Heart right ventricle (tissue), 16 donors: ENCODE measurements at regions of chr9 and their contacts with region 1.

Region 1: GRCh38 chr9:68844631-68845612 is 139.9 kb downstream of the PIP5K1B start:
- DNase-seq: peak; percentile 32 to 53
- ATAC-seq: peak in 7 of 8 donors; percentile 45 to 67 (median 55)
- H3K4me3 ChIP-seq: peak overlapping the region in 1 of 10 donors; percentile 28
- H3K27ac ChIP-seq: peak overlapping the region in 2 of 10 donors; percentile 15 to 68
- H3K4me1 ChIP-seq: peaks cover 0 to 46% (median 16%) of the 10 kb centered on the region in 9 donors
- H3K27me3 ChIP-seq: no peaks in the 10 kb centered on the region
- CTCF ChIP-seq: peak in 8 of 9 donors; percentile 40 to 67 (median 58)

Region 2: DNA sequence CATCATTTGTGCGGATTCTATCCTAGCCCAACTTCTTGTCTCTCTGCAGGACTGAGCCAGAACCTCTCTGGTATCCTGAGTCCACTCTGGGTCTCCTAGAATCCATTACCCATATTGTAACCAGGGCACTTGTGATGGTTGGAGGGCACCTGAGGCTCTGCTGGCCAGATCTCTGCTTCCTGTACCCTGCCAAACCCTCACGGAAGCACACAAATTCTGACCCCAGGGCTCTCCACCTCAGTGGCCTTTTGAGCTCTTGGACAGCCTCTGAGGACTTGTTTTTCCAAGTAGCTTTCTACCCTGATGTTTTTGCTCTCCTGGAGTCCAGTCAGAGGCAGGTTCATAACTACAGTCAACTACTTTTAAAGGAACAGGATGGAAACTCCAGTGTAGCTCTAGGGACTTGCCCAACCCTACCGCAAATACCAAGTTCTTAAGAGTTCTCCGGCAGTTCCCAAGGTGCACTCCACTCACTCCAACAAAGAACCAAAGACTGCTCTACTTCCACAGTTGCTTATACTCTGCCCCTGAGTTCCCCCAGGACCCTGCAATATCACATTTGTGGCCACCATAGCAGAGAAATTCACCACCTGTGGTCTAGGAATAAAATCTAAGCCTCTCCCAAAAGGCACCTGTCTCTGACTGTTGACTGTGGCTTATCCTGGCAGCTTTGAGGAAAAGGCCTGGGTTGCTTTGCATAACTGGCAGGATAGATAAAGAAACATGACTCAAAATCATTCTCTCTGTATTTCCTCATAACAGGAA is 130.3 kb before region 1 on chr9:
- intact Hi-C with region 1: loop called in 4 of 10 experiments (anchors 5 to 10 kb)
- DNase-seq: no peak
- ATAC-seq: peak in 1 of 8 donors; percentile 33
- H3K4me3 ChIP-seq: no peak overlapping the region
- H3K27ac ChIP-seq: no peak overlapping the region
- H3K4me1 ChIP-seq: peaks cover 0 to 52% (median 13%) of the 10 kb centered on the region in 9 donors
- H3K27me3 ChIP-seq: peaks cover 0 to 3% (median 0%) of the 10 kb centered on the region in 7 donors
- CTCF ChIP-seq: no peak